B cell (primary cell): ENCODE measurements at regions of chr16 and their contacts with region 1.

Region 1: GRCh38 chr16:67546761-67547422 is 15.4 kb upstream of the CTCF start:
- DNase-seq: peak; percentile 87
- ATAC-seq: peak; percentile 12
- H3K4me3 ChIP-seq: peak overlapping the region in 4 of 5 experiments; percentile 26 to 41 (median 39)
- H3K4me3 Mint-ChIP-seq: peak overlapping the region; percentile 85
- H3K27ac ChIP-seq: peak overlapping the region; percentile 91 to 95
- H3K27ac Mint-ChIP-seq: peak overlapping the region; percentile 98
- H3K4me1 ChIP-seq: peaks cover 83 to 94% of the 10 kb centered on the region in 2 donors
- H3K4me1 Mint-ChIP-seq: peaks cover 85% of the 10 kb centered on the region
- H3K27me3 ChIP-seq: no peaks in the 10 kb centered on the region
- H3K27me3 Mint-ChIP-seq: no peaks in the 10 kb centered on the region
- CTCF ChIP-seq: peak; percentile 100

Region 2: DNA sequence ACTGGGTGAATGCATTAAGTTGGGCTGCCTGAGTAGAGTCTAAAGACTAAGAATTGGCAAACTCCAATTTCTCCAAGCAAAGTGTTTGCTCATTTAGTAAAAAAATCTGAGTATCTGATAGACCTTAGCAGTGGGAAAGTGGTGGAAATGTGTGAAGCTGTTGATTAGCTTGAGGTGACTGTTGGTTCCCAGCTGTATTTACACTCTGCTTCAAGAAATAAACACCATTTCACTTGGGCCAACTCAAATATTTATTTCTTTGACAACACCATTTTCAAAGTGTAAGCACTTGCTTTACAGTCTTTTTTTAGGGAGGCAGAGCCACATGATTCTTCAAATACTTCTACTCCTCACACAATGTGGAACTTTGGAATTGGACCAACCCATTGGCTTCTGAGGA is 229.0 kb before region 1 on chr16:
- CTCF ChIA-PET with region 1: no interaction called
- POLR2A ChIA-PET with region 1: no interaction called
- intact Hi-C with region 1: no loop called
- DNase-seq: no peak
- ATAC-seq: no peak
- H3K4me3 ChIP-seq: no peak overlapping the region
- H3K4me3 Mint-ChIP-seq: no peak overlapping the region
- H3K27ac ChIP-seq: no peak overlapping the region
- H3K27ac Mint-ChIP-seq: no peak overlapping the region
- H3K4me1 ChIP-seq: no peaks in the 10 kb centered on the region
- H3K4me1 Mint-ChIP-seq: no peaks in the 10 kb centered on the region
- H3K27me3 ChIP-seq: no peaks in the 10 kb centered on the region
- H3K27me3 Mint-ChIP-seq: peaks cover 16% of the 10 kb centered on the region
- CTCF ChIP-seq: no peak

Region 3: GRCh38 chr16:67499106-67499505 is 47.8 kb before region 1 on chr16:
- CTCF ChIA-PET with region 1: interaction called, 15 read pairs
- POLR2A ChIA-PET with region 1: no interaction called
- intact Hi-C with region 1: loop called (anchors 2 kb)
- DNase-seq: no peak
- ATAC-seq: no peak
- H3K4me3 ChIP-seq: no peak overlapping the region
- H3K4me3 Mint-ChIP-seq: no peak overlapping the region
- H3K27ac ChIP-seq: no peak overlapping the region
- H3K27ac Mint-ChIP-seq: peak overlapping the region; percentile 70
- H3K4me1 ChIP-seq: peaks cover 13 to 17% of the 10 kb centered on the region in 2 donors
- H3K4me1 Mint-ChIP-seq: peaks cover 29% of the 10 kb centered on the region
- H3K27me3 ChIP-seq: no peaks in the 10 kb centered on the region
- H3K27me3 Mint-ChIP-seq: no peaks in the 10 kb centered on the region
- CTCF ChIP-seq: no peak

Region 4: GRCh38 chr16:67521095-67521804 is 25.6 kb before region 1 on chr16:
- CTCF ChIA-PET with region 1: interaction called, 163 read pairs
- POLR2A ChIA-PET with region 1: interaction called, 76 read pairs
- intact Hi-C with region 1: loop called (anchors 1 kb)
- DNase-seq: peak; percentile 99
- ATAC-seq: peak; percentile 71
- H3K4me3 ChIP-seq: peak overlapping the region; percentile 47 to 74 (median 61)
- H3K4me3 Mint-ChIP-seq: peak overlapping the region; percentile 94
- H3K27ac ChIP-seq: peak overlapping the region; percentile 96 to 97
- H3K27ac Mint-ChIP-seq: peak overlapping the region; percentile 99
- H3K4me1 ChIP-seq: peaks cover 44 to 69% of the 10 kb centered on the region in 2 donors
- H3K4me1 Mint-ChIP-seq: peaks cover 77% of the 10 kb centered on the region
- H3K27me3 ChIP-seq: no peaks in the 10 kb centered on the region
- H3K27me3 Mint-ChIP-seq: no peaks in the 10 kb centered on the region
- CTCF ChIP-seq: peak; percentile 87

Region 5: GRCh38 chr16:67561824-67562525 is 15.1 kb after region 1 on chr16:
- CTCF ChIA-PET with region 1: interaction called, 407 read pairs
- POLR2A ChIA-PET with region 1: interaction called, 166 read pairs
- intact Hi-C with region 1: loop called (anchors 1 kb)
- DNase-seq: peak; percentile 99
- ATAC-seq: peak; percentile 74
- H3K4me3 ChIP-seq: peak overlapping the region; percentile 50 to 76 (median 60)
- H3K4me3 Mint-ChIP-seq: peak overlapping the region; percentile 89
- H3K27ac ChIP-seq: peak overlapping the region; percentile 71 to 80
- H3K27ac Mint-ChIP-seq: peak overlapping the region; percentile 95
- H3K4me1 ChIP-seq: peaks cover 42 to 55% of the 10 kb centered on the region in 2 donors
- H3K4me1 Mint-ChIP-seq: peaks cover 50% of the 10 kb centered on the region
- H3K27me3 ChIP-seq: no peaks in the 10 kb centered on the region
- H3K27me3 Mint-ChIP-seq: no peaks in the 10 kb centered on the region
- CTCF ChIP-seq: no peak

Region 6: GRCh38 chr16:67632415-67633172 is 85.7 kb after region 1 on chr16:
- CTCF ChIA-PET with region 1: interaction called, 12 read pairs
- POLR2A ChIA-PET with region 1: no interaction called
- intact Hi-C with region 1: no loop called
- DNase-seq: no peak
- ATAC-seq: no peak
- H3K4me3 ChIP-seq: no peak overlapping the region
- H3K4me3 Mint-ChIP-seq: no peak overlapping the region
- H3K27ac ChIP-seq: no peak overlapping the region
- H3K27ac Mint-ChIP-seq: no peak overlapping the region
- H3K4me1 ChIP-seq: no peaks in the 10 kb centered on the region
- H3K4me1 Mint-ChIP-seq: no peaks in the 10 kb centered on the region
- H3K27me3 ChIP-seq: no peaks in the 10 kb centered on the region
- H3K27me3 Mint-ChIP-seq: no peaks in the 10 kb centered on the region
- CTCF ChIP-seq: no peak

Region 7: GRCh38 chr16:67660564-67661028 is 113.7 kb after region 1 on chr16 and contains the start of gene PARD6A:
- CTCF ChIA-PET with region 1: interaction called, 75 read pairs
- POLR2A ChIA-PET with region 1: interaction called, 8 read pairs
- intact Hi-C with region 1: no loop called
- DNase-seq: peak; percentile 99
- ATAC-seq: peak; percentile 83
- H3K4me3 ChIP-seq: peak within 1 kb of the TSS; percentile 80 to 99 (median 95)
- H3K4me3 Mint-ChIP-seq: peak within 1 kb of the TSS; percentile 97
- H3K27ac ChIP-seq: peak within 1 kb of the TSS; percentile 88 to 93
- H3K27ac Mint-ChIP-seq: peak within 1 kb of the TSS; percentile 97
- H3K4me1 ChIP-seq: peaks cover 14 to 24% of the 10 kb centered on the region in 2 donors
- H3K4me1 Mint-ChIP-seq: peaks cover 35% of the 10 kb centered on the region
- H3K27me3 ChIP-seq: no peaks in the 10 kb centered on the region
- H3K27me3 Mint-ChIP-seq: no peaks in the 10 kb centered on the region
- CTCF ChIP-seq: no peak
- total RNA-seq, gene PARD6A: 13.6 and 14.8 TPM in 2 replicates

Region 8: DNA sequence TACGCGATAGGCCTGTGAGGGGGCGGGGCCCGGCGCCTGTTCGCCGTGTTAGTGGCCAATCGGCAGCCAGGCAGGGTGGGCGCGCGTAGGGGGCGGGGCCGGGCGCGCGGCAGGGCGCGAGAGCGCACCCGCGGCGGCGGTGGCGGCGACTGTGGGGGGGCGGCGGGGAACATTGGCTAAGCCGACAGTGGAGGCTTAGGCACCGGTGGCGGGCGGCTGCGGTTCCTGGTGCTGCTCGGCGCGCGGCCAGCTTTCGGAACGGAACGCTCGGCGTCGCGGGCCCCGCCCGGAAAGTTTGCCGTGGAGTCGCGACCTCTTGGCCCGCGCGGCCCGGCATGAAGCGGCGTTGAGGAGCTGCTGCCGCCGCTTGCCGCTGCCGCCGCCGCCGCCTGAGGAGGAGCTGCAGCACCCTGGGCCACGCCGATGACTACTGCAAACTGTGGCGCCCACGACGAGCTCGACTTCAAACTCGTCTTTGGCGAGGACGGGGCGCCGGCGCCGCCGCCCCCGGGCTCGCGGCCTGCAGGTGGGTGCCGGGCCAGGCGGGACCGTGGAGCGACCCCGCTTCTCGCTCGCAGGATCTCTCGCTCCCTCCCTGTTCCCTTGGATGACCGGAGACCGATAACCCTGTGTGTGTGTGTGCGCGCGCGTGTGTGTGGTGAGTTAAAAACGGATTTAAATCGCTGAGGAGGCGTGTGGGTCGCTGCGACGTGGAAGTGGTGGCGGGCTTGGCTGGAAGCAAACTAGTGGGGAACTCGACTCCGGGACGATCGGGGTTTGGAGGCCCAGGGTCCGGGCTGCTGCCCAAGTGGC is 538.6 kb after region 1 on chr16 and contains the start of gene NFATC3:
- CTCF ChIA-PET with region 1: no interaction called
- POLR2A ChIA-PET with region 1: no interaction called
- intact Hi-C with region 1: loop called (anchors 10 kb)
- DNase-seq: peak; percentile 99
- ATAC-seq: peak; percentile 76
- H3K4me3 ChIP-seq: peak within 1 kb of the TSS; percentile 90 to 97 (median 94)
- H3K4me3 Mint-ChIP-seq: peak within 1 kb of the TSS; percentile 86
- H3K27ac ChIP-seq: peak within 1 kb of the TSS; percentile 81 to 93
- H3K27ac Mint-ChIP-seq: peak within 1 kb of the TSS; percentile 96
- H3K4me1 ChIP-seq: peaks cover 57 to 73% of the 10 kb centered on the region in 2 donors
- H3K4me1 Mint-ChIP-seq: peaks cover 68% of the 10 kb centered on the region
- H3K27me3 ChIP-seq: no peaks in the 10 kb centered on the region
- H3K27me3 Mint-ChIP-seq: no peaks in the 10 kb centered on the region
- CTCF ChIP-seq: no peak
- total RNA-seq, gene NFATC3: 115 TPM in 2 replicates